ENCODE measurements at regions of chr4 and their contacts with region 1.

Region 1: GRCh38 chr4:155667568-155668511 is 1.2 kb downstream of the GUCY1A1 start:
- DNase-seq: peak; percentile 76
- ATAC-seq: peak; percentile 85

Region 2: GRCh38 chr4:155442267-155443105 is 225.4 kb before region 1 on chr4:
- intact Hi-C with region 1: loop called (anchors 2 kb)
- DNase-seq: peak; percentile 90
- ATAC-seq: peak; percentile 88

Region 3: DNA sequence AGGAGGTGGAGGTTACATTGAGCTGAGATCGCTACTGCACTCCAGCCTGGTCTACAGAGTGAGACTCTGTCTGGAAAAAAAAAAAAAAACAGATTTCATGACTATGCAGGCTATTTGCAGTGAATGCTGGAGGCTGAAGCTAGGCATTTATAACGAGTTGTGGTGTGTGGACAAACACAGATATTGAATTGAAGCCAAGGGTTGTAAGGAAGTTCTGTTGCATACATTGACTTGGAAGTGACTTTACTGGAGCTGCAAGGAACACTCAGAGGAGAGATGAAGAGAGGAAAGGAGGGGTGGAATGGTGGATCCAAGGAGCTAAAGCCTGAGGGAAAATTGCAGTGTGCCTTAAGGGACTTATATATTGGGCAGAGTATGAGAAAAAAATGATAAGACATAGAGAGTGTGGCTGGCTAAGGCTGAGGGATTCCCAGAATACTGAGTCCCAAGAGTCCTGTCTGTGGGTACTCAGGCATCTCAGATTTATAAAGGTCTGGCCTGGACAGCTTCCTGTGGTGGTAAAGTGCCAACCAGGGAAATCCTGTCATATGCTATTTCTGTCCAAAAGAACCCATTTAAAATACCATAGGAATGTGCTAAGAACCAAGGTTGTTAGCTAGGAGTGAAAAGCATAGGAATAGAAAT is 89.0 kb before region 1 on chr4:
- intact Hi-C with region 1: loop called (anchors 5 kb)
- DNase-seq: no peak
- ATAC-seq: no peak

Region 4: DNA sequence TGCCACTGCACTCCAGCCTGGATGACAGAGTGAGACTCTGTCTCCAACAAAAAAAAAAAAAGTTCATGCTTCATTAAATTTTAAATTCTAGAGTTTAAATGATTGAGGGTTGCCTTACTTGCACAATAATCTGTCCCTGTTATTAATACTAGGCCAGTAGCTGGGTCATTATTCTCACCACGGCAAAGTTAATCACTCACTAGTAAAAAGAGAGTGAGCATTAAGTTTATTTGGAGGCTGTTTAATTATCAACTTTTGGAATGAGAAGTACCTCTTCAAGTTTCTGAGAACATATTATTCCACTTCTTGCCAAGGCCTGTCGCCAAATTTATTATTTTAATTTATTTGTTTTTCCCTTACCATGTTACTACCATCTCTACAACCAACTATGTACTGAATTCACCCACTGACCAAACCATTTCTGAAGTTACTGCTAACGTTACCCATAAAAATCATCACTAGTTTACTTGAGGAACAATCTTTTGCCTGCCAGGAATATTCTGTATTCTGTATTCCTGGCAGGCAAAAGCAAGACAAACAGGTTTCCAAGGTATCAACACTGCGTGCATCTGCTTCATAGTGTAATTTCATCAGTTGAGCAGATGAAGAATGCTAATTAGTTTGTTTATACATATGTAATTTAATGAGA is 25.3 kb after region 1 on chr4:
- intact Hi-C with region 1: loop called (anchors 2 kb)
- DNase-seq: no peak
- ATAC-seq: no peak

Region 5: GRCh38 chr4:155758481-155759404 is 90.9 kb after region 1 on chr4 and contains the start of gene GUCY1B1:
- intact Hi-C with region 1: loop called (anchors 2 kb)
- DNase-seq: peak; percentile 96
- ATAC-seq: peak; percentile 98
- total RNA-seq, gene GUCY1B1: 32.6 TPM

Measured in Right ventricle myocardium inferior (tissue), 1 donor.